H1 (cell line): ENCODE measurements at regions of chr7 and their contacts with region 1.

Region 1: DNA sequence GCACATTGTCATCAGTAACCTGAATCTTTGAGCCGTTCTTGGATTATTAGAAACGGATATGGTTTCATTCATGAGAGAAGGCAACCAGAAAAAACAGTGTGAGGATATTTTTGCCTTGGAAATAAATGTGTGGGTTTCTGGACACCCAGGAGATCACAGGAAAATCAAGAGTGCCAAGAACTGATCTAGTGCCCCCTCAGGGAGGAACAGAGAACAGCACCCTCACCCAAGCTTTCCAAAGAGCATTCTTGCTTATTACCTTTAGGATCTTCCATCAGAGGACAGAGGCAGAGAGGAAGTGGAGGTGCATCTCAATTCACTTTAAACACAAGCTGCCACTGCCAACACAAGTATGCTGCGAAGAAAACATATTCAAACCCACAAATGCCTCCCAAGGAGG is 851.5 kb upstream of the COBL start:
- DNase-seq: peak; percentile 21 to 73
- H3K4me3 ChIP-seq: no peak overlapping the region
- H3K27ac ChIP-seq: no peak overlapping the region
- H3K4me1 ChIP-seq: peaks cover 0 to 4% (median 0%) of the 10 kb centered on the region in 4 experiments; a peak in 2 of 7 replicates
- H3K27me3 ChIP-seq: no peaks in the 10 kb centered on the region
- CTCF ChIP-seq: peak in 2 of 3 experiments; percentile 56 to 80; a peak in 3 of 4 replicates
- EP300 ChIP-seq: no peak
- POLR2A ChIP-seq: no peak
- RAD21 ChIP-seq: peak; percentile 56 to 69

Region 2: GRCh38 chr7:52030722-52031121 is 137.4 kb before region 1 on chr7:
- CTCF ChIA-PET with region 1: no interaction called
- POLR2A ChIA-PET with region 1: no interaction called
- DNase-seq: no peak
- H3K4me3 ChIP-seq: no peak overlapping the region
- H3K27ac ChIP-seq: no peak overlapping the region
- H3K4me1 ChIP-seq: no peaks in the 10 kb centered on the region
- H3K27me3 ChIP-seq: no peaks in the 10 kb centered on the region
- CTCF ChIP-seq: no peak
- EP300 ChIP-seq: no peak
- POLR2A ChIP-seq: no peak
- RAD21 ChIP-seq: no peak

Region 3: DNA sequence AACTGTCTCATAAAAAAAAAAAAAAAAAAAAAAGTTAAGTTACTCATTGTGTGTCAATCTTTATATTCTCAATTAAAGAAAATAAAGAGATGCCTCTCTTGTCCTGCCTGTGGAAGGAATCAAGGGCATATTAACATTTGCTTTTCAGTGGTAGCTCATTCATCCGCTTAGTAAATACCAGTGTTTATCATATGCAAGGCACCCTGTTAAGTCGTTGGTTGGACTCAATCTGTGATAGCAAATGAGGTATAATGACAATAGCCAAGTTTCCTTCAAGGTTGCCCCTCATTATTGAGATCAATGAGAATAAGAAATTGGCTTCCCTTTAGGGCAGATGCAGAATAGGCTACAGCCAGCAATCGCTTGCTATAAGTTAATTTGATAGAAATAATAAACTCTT is 38.8 kb before region 1 on chr7:
- CTCF ChIA-PET with region 1: no interaction called
- POLR2A ChIA-PET with region 1: no interaction called
- DNase-seq: no peak
- H3K4me3 ChIP-seq: no peak overlapping the region
- H3K27ac ChIP-seq: no peak overlapping the region
- H3K4me1 ChIP-seq: peaks cover 0 to 5% (median 0%) of the 10 kb centered on the region in 4 experiments; a peak in 1 of 7 replicates
- H3K27me3 ChIP-seq: no peaks in the 10 kb centered on the region
- CTCF ChIP-seq: no peak
- EP300 ChIP-seq: no peak
- POLR2A ChIP-seq: no peak
- RAD21 ChIP-seq: no peak

Region 4: GRCh38 chr7:52184006-52184703 is 16.1 kb after region 1 on chr7:
- CTCF ChIA-PET with region 1: interaction called, 10 read pairs
- POLR2A ChIA-PET with region 1: no interaction called
- DNase-seq: no peak
- H3K4me3 ChIP-seq: no peak overlapping the region
- H3K27ac ChIP-seq: 0 out of 2 replicates have a peak overlapping the region, but pooled peaks have one; percentile 14
- H3K4me1 ChIP-seq: no peaks in the 10 kb centered on the region
- H3K27me3 ChIP-seq: no peaks in the 10 kb centered on the region
- CTCF ChIP-seq: no peak
- EP300 ChIP-seq: no peak
- POLR2A ChIP-seq: no peak
- RAD21 ChIP-seq: no peak